ENCODE measurements at regions of chr16 and their contacts with region 1.

Region 1: GRCh38 chr16:4624015-4624826 is at the start of gene MGRN1:
- DNase-seq: peak; percentile 99
- H3K4me3 ChIP-seq: peak within 1 kb of the TSS; percentile 64 to 77 (median 69)
- H3K27ac ChIP-seq: peak within 1 kb of the TSS; percentile 80
- H3K4me1 ChIP-seq: peaks cover 10% of the 10 kb centered on the region
- H3K27me3 ChIP-seq: no peaks in the 10 kb centered on the region
- CTCF ChIP-seq: peak; percentile 93 to 94
- POLR2A ChIP-seq: no peak
- total RNA-seq, gene MGRN1: 73.0 and 80.9 TPM in 2 replicates

Region 2: GRCh38 chr16:4649744-4650442 is 25.7 kb after region 1 on chr16:
- CTCF ChIA-PET with region 1: interaction called, 14 read pairs
- POLR2A ChIA-PET with region 1: no interaction called
- dilution Hi-C with region 1: no loop called
- intact Hi-C with region 1: loop called (anchors 2 kb)
- DNase-seq: no peak
- H3K4me3 ChIP-seq: no peak overlapping the region
- H3K27ac ChIP-seq: no peak overlapping the region
- H3K4me1 ChIP-seq: no peaks in the 10 kb centered on the region
- H3K27me3 ChIP-seq: no peaks in the 10 kb centered on the region
- CTCF ChIP-seq: no peak
- POLR2A ChIP-seq: no peak

Region 3: GRCh38 chr16:4693296-4693955 is 69.2 kb after region 1 on chr16 and contains the start of gene NUDT16L1:
- CTCF ChIA-PET with region 1: interaction called, 3 read pairs
- POLR2A ChIA-PET with region 1: no interaction called
- dilution Hi-C with region 1: no loop called
- intact Hi-C with region 1: loop called (anchors 2 kb)
- DNase-seq: peak; percentile 98
- H3K4me3 ChIP-seq: peak within 1 kb of the TSS; percentile 66 to 93 (median 79)
- H3K27ac ChIP-seq: peak within 1 kb of the TSS; percentile 32
- H3K4me1 ChIP-seq: peaks cover 4% of the 10 kb centered on the region
- H3K27me3 ChIP-seq: no peaks in the 10 kb centered on the region
- CTCF ChIP-seq: peak in 1 of 2 donors; percentile 19
- POLR2A ChIP-seq: peak; percentile 78
- total RNA-seq, gene NUDT16L1: 22.8 and 24.7 TPM in 2 replicates